Activated T-helper 1 cell treated with anti-CD3 and anti-CD28 coated beads, Interleukin-12 subunit alpha, Interleukin-12 subunit beta, Interleukin-2, Interleukin-4 antibody, amounts not matched to agents 30 ng/mL and 10 ng/mL and 1 ng/mL, durations not matched to agents 14 hours and 24 hours and 36 hours (primary cell): ENCODE measurements at regions of chr16 and their contacts with region 1.

Region 1: DNA sequence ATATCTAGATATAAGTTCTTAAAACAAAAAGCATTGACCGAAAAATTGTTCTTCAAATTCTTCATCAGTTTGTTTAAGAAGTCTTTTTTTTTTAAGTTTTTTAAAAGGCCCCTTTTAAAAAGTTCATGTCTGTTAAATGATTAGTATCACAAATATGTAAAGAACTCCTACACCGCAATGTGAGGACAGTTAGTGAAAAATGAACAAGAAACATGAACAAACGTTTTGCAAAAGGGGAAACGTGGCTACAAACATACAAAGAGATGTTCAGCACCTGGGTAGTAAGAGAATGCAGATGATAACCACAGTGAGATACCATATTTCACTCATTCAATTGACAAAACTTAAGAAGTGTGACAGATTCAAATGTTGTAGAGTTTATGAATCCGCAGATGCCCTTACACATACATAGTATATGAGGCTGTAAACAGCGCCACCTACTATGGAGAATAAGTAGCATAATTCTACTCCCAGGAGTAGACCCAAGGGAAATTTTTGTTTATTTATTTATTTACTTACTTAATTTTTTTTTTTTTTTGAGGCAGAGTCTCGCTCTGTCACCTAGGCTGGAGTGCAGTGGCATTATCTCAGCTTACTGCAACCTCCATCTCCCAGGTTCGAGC is 35.3 kb downstream of the GAN start:
- DNase-seq: no peak
- H3K4me3 Mint-ChIP-seq: no peak overlapping the region
- H3K27ac Mint-ChIP-seq: no peak overlapping the region
- H3K4me1 Mint-ChIP-seq: peaks cover 10% of the 10 kb centered on the region
- H3K27me3 Mint-ChIP-seq: no peaks in the 10 kb centered on the region

Region 2: GRCh38 chr16:81204798-81205680 is 145.1 kb before region 1 on chr16:
- intact Hi-C with region 1: loop called (anchors 5 kb)
- DNase-seq: peak; percentile 10
- H3K4me3 Mint-ChIP-seq: no peak overlapping the region
- H3K27ac Mint-ChIP-seq: no peak overlapping the region
- H3K4me1 Mint-ChIP-seq: no peaks in the 10 kb centered on the region
- H3K27me3 Mint-ChIP-seq: peaks cover 11% of the 10 kb centered on the region

Region 3: DNA sequence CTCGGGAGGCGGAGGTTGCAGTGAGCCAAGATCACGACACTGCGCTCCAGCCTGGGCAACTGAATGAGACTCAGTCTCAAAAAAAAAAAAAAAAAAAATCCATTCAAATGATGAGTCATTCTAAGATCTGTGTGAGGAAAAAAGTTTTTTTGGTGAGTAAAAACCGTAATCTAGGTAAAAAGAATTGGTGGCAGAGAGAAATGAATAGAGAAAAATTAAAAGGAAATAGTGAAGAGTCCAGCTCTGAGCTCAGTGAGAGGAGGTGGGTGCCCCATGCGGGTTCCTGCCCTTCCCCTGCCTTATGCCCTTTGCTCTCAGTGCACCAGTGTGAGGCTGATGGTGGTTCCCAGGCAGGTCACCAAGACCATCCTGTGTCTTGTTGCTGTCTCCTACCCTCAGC is 14.4 kb before region 1 on chr16:
- intact Hi-C with region 1: loop called (anchors 2 kb)
- DNase-seq: no peak
- H3K4me3 Mint-ChIP-seq: no peak overlapping the region
- H3K27ac Mint-ChIP-seq: peak overlapping the region; percentile 53
- H3K4me1 Mint-ChIP-seq: peaks cover 13% of the 10 kb centered on the region
- H3K27me3 Mint-ChIP-seq: no peaks in the 10 kb centered on the region